T-cell (primary cell): ENCODE measurements at regions of chr10 and their contacts with region 1.

Region 1: GRCh38 chr10:19133992-19134391 is 85.4 kb downstream of the MALRD1 start:
- DNase-seq: no peak
- ATAC-seq: no peak
- H3K4me3 ChIP-seq: no peak overlapping the region
- H3K4me3 Mint-ChIP-seq: no peak overlapping the region
- H3K27ac ChIP-seq: no peak overlapping the region
- H3K27ac Mint-ChIP-seq: no peak overlapping the region
- H3K4me1 ChIP-seq: no peaks in the 10 kb centered on the region
- H3K4me1 Mint-ChIP-seq: no peaks in the 10 kb centered on the region
- H3K27me3 ChIP-seq: no peaks in the 10 kb centered on the region
- H3K27me3 Mint-ChIP-seq: no peaks in the 10 kb centered on the region

Region 2: GRCh38 chr10:19220829-19221228 is 86.8 kb after region 1 on chr10:
- CTCF ChIA-PET with region 1: no interaction called
- POLR2A ChIA-PET with region 1: no interaction called
- DNase-seq: no peak
- ATAC-seq: no peak
- H3K4me3 ChIP-seq: no peak overlapping the region
- H3K4me3 Mint-ChIP-seq: no peak overlapping the region
- H3K27ac ChIP-seq: no peak overlapping the region
- H3K27ac Mint-ChIP-seq: no peak overlapping the region
- H3K4me1 ChIP-seq: no peaks in the 10 kb centered on the region
- H3K4me1 Mint-ChIP-seq: no peaks in the 10 kb centered on the region
- H3K27me3 ChIP-seq: no peaks in the 10 kb centered on the region
- H3K27me3 Mint-ChIP-seq: no peaks in the 10 kb centered on the region

Region 3: GRCh38 chr10:19488592-19489280 is 354.7 kb after region 1 on chr10:
- CTCF ChIA-PET with region 1: interaction called in 1 of 2 experiments, 12 read pairs
- POLR2A ChIA-PET with region 1: no interaction called
- DNase-seq: peak in 3 of 35 experiments; percentile 0 to 1 (median 1)
- ATAC-seq: no peak
- H3K4me3 ChIP-seq: no peak overlapping the region
- H3K4me3 Mint-ChIP-seq: peak overlapping the region in 2 of 3 donors; percentile 8 to 10
- H3K27ac ChIP-seq: no peak overlapping the region
- H3K27ac Mint-ChIP-seq: no peak overlapping the region
- H3K4me1 ChIP-seq: no peaks in the 10 kb centered on the region
- H3K4me1 Mint-ChIP-seq: no peaks in the 10 kb centered on the region
- H3K27me3 ChIP-seq: no peaks in the 10 kb centered on the region
- H3K27me3 Mint-ChIP-seq: peaks cover 0 to 2% of the 10 kb centered on the region in 2 donors